Left ventricle myocardium superior (tissue), 1 donor: ENCODE measurements at regions of chr6 and their contacts with region 1.

Region 1: DNA sequence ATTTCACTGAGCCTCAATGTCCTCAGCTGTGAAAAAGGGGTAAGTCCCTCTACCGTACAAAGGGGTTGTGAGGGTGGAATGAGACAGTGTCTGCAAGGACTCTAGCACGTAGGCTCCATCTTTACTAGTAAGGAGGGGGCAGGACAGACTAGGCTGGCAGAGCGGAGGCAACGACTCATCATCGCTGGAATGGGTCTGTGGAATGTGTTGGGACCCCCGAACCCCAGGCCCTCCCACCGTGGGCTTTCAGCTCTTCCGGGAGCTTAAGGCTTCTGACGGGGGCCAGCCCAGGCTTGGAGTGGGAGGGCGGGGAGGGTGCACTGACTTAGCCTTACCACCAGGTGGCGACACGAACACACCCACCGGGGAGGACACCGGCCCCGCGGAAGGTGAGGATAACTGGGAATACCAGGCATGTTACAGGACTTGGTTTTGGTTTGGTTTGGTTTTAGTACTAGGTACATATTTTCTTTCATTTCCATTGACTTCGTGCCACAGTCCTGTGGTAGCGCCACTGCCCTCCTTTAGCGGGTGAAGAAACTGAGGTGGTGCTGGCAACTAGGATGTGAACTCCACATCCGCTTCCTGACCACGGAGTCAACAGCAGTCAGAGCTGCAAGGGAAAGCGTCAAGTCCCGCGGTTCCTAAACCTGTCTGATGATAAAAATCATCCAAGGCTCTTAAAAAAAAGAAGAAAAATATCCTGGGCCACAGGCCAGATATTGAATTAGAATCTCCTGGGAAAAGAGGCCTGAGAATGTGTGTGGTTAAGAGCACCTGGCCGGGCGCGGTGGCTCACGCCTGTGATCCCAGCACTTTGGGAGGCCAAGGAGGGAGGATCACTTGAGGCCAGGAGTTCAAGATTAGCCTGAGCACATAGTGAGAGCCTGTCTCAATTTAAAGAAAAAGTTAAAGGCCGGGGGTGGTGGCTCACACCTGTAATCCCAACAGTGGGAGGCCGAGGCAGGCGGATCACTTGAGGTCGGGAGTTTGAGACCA is 10.3 kb upstream of the TULP1 start:
- DNase-seq: peak; percentile 83
- ATAC-seq: peak; percentile 95

Region 2: DNA sequence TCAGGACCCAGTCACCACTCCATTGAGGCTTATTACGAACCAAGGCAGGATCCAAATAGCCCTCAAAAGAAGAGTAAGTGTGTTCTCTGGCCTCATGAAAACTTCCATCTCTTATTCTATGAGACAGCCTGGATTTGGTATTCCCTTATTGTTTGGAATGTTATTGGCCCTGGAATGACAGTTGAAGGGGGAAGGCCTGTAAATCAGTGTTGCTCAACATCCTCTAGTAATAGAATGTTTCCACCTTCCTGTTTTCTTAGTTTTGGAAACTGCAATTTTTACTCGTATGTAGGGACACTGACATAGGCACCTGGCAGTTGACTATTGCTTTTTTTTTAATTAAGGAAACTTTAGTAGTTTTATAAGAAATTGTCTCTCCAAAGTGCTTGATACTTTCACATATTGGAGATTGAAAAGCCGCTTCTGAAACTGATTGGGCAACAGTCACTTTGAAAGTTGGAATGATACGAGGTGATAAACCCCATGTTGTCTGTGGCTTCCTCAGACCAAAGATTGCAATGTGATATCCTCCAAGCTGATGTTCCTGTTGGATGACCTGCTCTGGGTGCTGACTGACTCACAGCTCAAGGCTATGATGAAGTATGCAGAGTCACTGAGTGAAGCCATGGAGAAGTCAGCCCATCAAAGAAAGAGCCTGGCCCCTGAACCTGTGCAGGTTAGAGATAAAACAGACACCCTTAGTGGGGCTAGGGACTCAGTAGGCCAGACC is 688.0 kb before region 1 on chr6:
- intact Hi-C with region 1: no loop called
- DNase-seq: no peak
- ATAC-seq: no peak

Region 3: GRCh38 chr6:35583893-35584688 is 61.1 kb after region 1 on chr6:
- intact Hi-C with region 1: loop called (anchors 5 kb)
- DNase-seq: no peak
- ATAC-seq: peak; percentile 79